ENCODE measurements at regions of chr9 and their contacts with region 1.

Region 1: GRCh38 chr9:132260846-132261245 is 93.9 kb downstream of the SETX start:
- DNase-seq: no peak
- H3K4me3 ChIP-seq: no peak overlapping the region
- H3K27ac ChIP-seq: no peak overlapping the region
- H3K4me1 ChIP-seq: no peaks in the 10 kb centered on the region; a peak in 1 of 4 replicates
- H3K27me3 ChIP-seq: no peaks in the 10 kb centered on the region
- CTCF ChIP-seq: no peak
- EP300 ChIP-seq: no peak
- RAD21 ChIP-seq: no peak

Region 2: GRCh38 chr9:131755541-131756198 is 505.2 kb before region 1 on chr9:
- CTCF ChIA-PET with region 1: interaction called, 71 read pairs
- POLR2A ChIA-PET with region 1: no interaction called
- DNase-seq: peak; percentile 86
- H3K4me3 ChIP-seq: peak overlapping the region in 1 of 2 experiments; percentile 20; a peak in 1 of 4 replicates
- H3K27ac ChIP-seq: no peak overlapping the region
- H3K4me1 ChIP-seq: no peaks in the 10 kb centered on the region
- H3K27me3 ChIP-seq: no peaks in the 10 kb centered on the region; the same call in 1 of the 2 replicates
- CTCF ChIP-seq: peak; percentile 79
- EP300 ChIP-seq: no peak
- RAD21 ChIP-seq: peak; percentile 80

Region 3: GRCh38 chr9:132249123-132249522 is 11.7 kb before region 1 on chr9:
- CTCF ChIA-PET with region 1: interaction called, 22 read pairs
- POLR2A ChIA-PET with region 1: interaction called, 3 read pairs
- DNase-seq: no peak
- H3K4me3 ChIP-seq: no peak overlapping the region
- H3K27ac ChIP-seq: no peak overlapping the region
- H3K4me1 ChIP-seq: no peaks in the 10 kb centered on the region; a peak in 1 of 4 replicates
- H3K27me3 ChIP-seq: no peaks in the 10 kb centered on the region
- CTCF ChIP-seq: no peak
- EP300 ChIP-seq: no peak
- RAD21 ChIP-seq: no peak

Region 4: DNA sequence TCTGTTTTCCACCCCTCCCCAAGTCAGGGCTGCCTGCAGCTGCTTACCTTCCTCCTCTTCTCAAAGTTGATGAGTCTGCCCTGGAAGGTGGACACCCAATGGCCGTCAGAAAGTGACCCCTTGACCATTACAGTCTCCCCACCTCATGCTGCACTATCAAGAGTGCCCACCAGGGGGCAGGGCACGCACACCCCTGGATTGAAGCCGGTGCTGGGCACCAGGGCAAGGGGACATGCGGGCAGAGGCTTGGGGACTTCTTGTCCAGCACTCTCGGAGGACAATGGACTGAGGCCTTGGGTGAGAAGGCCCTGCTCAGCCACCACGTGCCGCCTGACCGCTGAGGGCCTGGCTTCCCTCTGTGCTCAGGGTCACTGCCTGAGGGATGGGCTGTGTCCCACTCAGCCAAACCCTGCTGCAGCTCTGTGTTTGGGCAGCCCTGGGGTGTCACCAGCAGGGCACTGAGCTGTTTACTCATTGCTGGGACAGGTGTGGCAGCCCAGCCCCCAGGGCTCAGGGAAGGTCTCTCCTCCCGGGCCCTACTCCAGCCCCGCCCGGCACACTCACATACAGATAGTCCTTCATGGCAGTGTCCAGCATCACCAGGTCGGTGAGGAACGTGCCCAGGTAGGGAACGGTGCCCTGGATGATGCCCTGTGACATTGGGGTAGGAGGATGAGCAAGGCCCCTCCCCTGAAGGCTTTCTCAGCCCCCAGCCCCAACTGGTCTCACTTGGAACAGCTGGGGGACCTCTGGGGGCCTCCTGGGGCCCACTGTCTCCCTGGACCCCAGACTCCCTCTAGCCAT is 842.5 kb after region 1 on chr9:
- CTCF ChIA-PET with region 1: no interaction called
- POLR2A ChIA-PET with region 1: no interaction called
- DNase-seq: peak; percentile 93
- H3K4me3 ChIP-seq: no peak overlapping the region; a peak in 1 of 4 replicates
- H3K27ac ChIP-seq: peak overlapping the region in 1 of 2 experiments; percentile 50; a peak in 1 of 4 replicates
- H3K4me1 ChIP-seq: peaks cover 0 to 2% of the 10 kb centered on the region in 2 experiments; a peak in 1 of 4 replicates
- H3K27me3 ChIP-seq: no peaks in the 10 kb centered on the region
- CTCF ChIP-seq: peak; percentile 94
- EP300 ChIP-seq: no peak
- RAD21 ChIP-seq: peak; percentile 92